Mammary epithelial cell (primary cell): ENCODE measurements at regions of chr16 and their contacts with region 1.

Region 1: DNA sequence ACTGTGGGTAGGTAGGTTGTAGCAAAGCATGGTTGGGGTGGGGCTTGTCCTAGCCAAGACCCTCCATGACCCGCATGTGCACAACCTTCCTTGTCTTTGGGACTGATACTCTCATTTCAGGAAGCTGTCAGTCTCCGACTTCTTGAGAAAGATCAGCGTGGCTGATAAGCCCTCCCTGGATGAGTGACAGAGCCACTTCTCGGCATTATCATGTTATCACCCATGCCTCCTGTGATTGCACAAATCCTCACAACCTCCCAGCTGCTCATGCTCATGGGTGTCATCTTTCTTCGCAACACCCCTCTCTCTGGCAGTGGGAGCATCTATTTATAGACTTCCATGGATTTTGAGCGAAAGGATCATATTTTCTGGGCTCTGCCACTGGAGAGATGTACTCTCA is 314.2 kb downstream of the FOXL1 start:
- DNase-seq: no peak
- H3K4me3 ChIP-seq: no peak overlapping the region
- H3K27ac ChIP-seq: no peak overlapping the region
- H3K4me1 ChIP-seq: no peaks in the 10 kb centered on the region
- H3K27me3 ChIP-seq: no peaks in the 10 kb centered on the region
- CTCF ChIP-seq: no peak

Region 2: GRCh38 chr16:86994651-86995171 is 102.2 kb after region 1 on chr16:
- CTCF ChIA-PET with region 1: no interaction called
- dilution Hi-C with region 1: loop called (anchors 5 kb)
- in situ Hi-C with region 1: no loop called
- intact Hi-C with region 1: no loop called
- DNase-seq: peak; percentile 69
- H3K4me3 ChIP-seq: no peak overlapping the region
- H3K27ac ChIP-seq: no peak overlapping the region
- H3K4me1 ChIP-seq: peaks cover 10% of the 10 kb centered on the region
- H3K27me3 ChIP-seq: no peaks in the 10 kb centered on the region
- CTCF ChIP-seq: no peak

Region 3: DNA sequence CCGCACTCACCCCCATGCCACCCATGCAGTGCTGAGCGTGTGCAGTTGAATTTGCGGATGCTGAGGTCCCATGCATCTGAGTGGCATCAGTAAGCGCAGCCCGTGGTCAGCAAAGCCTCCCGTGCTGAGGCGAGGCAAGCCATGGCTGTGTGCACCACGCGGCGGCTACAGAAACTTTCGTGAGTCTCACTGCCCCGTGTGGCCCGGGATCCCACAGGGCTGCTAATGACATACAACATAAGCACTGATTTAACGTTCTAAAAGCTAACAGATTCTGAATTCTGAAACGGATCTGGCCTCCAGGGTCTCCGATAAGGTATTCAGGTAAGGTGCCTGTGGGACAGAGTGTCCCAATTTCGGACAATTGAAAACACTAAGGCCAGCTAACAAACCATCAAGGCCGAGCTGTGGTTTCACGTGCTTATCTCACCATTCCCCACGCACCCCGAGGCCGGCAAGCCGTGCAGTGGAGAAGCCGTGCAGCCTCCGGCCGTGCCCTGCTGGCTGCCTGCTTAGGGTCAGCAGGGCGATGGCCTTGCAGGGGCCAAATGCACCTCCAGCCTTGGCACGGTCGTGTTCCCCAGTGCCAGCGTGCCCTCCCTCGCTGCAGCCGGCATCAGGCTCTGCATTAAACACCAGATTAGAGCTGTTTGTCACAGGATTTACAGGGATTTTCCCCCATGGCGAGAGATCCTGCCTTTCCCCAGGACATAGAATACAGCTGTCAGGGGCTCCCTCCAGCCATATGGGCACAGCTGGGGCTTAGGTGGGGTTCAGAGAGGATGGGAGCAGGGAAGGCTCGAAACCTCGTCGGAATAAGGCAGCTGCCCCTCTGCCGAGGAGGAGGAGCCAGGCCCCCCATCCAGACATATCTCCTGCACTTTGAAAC is 233.0 kb after region 1 on chr16:
- CTCF ChIA-PET with region 1: no interaction called
- dilution Hi-C with region 1: no loop called
- in situ Hi-C with region 1: no loop called
- intact Hi-C with region 1: no loop called
- DNase-seq: no peak
- H3K4me3 ChIP-seq: no peak overlapping the region
- H3K27ac ChIP-seq: no peak overlapping the region
- H3K4me1 ChIP-seq: peaks cover 16% of the 10 kb centered on the region
- H3K27me3 ChIP-seq: no peaks in the 10 kb centered on the region
- CTCF ChIP-seq: no peak